ENCODE measurements at regions of chr12 and their contacts with region 1.

Region 1: GRCh38 chr12:122090759-122091515 is 12.4 kb downstream of the MLXIP start:
- DNase-seq: peak; percentile 94
- H3K4me3 ChIP-seq: no peak overlapping the region
- CTCF ChIP-seq: no peak

Region 2: DNA sequence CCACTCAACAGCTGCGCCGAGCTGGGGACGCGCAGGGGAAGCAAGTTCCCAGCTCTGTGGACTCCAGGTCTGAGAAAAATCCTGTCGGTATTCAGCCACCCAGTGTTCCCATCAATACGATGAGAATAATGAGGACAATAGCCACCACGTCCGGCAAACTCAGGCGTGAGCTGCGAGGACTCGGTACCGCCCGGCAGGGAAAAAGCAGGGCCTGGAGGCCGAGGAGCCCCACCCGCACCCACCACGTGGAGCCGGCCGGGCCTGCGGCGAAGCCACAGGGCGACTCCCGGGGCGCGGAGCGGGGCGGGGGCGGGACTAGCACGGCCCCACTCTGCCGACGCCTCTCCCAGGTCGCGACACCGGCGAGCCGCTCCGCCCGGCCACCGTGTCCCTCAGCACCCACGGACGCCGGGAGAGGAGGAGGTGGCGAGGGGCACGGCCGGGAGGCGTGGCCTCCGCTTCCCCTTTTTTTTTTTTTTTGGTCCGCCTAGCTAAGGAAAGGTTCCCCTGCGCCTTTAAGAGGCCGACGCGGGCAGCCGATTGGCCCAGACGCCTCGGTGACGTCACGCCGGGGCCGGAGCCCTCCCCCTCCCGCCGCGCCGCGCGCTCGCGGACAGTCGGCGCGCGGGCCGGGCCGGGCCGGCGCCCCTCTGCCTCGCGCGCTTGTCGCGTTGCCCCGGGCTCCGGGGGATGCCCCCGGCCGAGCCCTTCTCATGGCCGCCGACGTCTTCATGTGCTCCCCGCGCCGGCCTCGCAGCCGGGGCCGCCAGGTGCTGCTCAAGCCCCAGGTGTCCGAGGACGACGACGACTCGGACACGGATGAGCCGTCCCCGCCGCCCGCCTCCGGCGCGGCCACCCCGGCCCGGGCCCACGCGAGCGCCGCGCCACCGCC is 12.6 kb before region 1 on chr12 and contains the start of gene MLXIP:
- CTCF ChIA-PET with region 1: interaction called, 8 read pairs
- POLR2A ChIA-PET with region 1: interaction called, 25 read pairs
- DNase-seq: no peak
- H3K4me3 ChIP-seq: peak within 1 kb of the TSS; percentile 86
- CTCF ChIP-seq: no peak